ENCODE measurements at regions of chr9 and their contacts with region 1.

Region 1: GRCh38 chr9:136283291-136284235 is 20.3 kb downstream of the CCDC187 start:
- DNase-seq: peak; percentile 43 to 57
- ATAC-seq: peak; percentile 93 to 95
- H3K4me3 ChIP-seq: peak overlapping the region; percentile 23 to 37 (median 26)
- H3K27ac ChIP-seq: no peak overlapping the region
- H3K4me1 ChIP-seq: peaks cover 6 to 8% of the 10 kb centered on the region in 2 donors
- H3K27me3 ChIP-seq: peaks cover 16 to 33% (median 17%) of the 10 kb centered on the region in 3 donors
- CTCF ChIP-seq: peak; percentile 60 to 85 (median 74)
- POLR2A ChIP-seq: no peak

Region 2: GRCh38 chr9:136133191-136133958 is 150.2 kb before region 1 on chr9:
- in situ Hi-C with region 1: no loop called
- intact Hi-C with region 1: loop called (anchors 1 kb)
- DNase-seq: no peak
- ATAC-seq: no peak
- H3K4me3 ChIP-seq: peak overlapping the region; percentile 12 to 39 (median 34)
- H3K27ac ChIP-seq: no peak overlapping the region
- H3K4me1 ChIP-seq: peaks cover 4% of the 10 kb centered on the region in 2 donors
- H3K27me3 ChIP-seq: peaks cover 65 to 88% (median 76%) of the 10 kb centered on the region in 3 donors
- CTCF ChIP-seq: peak in 1 of 5 experiments; percentile 13
- POLR2A ChIP-seq: no peak

Region 3: DNA sequence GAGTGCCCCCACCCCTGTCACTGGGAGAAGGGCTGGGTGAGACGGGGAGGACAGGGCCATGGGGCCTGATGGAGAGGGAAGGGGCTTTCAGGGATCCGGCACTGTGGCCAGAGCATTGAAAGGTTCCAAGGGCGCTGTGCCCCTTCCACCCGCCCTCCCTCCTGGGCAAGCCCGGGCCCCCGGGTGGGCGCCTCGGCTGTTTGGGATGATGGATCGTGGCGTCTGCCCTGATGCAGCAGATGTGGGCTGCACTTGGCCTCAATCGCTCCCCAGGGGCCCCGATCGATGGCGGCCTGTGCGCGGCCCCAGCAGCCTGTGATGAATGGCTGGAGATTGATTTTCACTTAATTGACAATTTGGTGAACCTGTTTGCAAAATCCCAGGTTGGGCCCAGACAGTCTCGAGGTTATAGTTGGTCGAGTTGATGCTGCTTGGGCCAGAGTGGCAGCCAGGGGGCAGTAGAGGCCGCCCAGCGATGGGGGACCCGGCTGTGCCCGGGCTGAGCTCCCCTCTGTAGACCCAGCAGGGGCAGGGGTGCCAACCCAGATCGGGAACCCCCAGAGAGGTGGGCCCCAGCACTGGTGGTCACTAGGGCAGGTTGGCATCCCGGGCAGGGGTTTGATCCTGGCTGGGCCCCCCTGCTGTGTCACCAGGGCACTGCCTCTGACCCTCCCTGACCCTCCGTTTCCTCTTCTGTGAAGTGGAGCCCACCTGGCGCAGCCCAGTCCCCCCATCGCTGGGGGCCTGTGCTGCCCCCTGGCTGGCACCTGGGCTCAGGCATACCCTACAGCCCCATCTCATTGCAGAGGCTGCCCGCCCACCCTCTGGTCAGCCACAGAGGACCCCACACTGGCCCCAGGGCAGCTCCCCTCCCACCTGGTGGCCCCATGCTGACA is 113.3 kb before region 1 on chr9:
- in situ Hi-C with region 1: loop called in 1 of 4 experiments (anchors 25 kb)
- intact Hi-C with region 1: loop called (anchors 1 kb)
- DNase-seq: no peak
- ATAC-seq: no peak
- H3K4me3 ChIP-seq: no peak overlapping the region
- H3K27ac ChIP-seq: no peak overlapping the region
- H3K4me1 ChIP-seq: no peaks in the 10 kb centered on the region
- H3K27me3 ChIP-seq: peaks cover 18 to 33% (median 31%) of the 10 kb centered on the region in 3 donors
- CTCF ChIP-seq: peak in 4 of 5 experiments; percentile 34 to 54 (median 48)
- POLR2A ChIP-seq: no peak

Region 4: GRCh38 chr9:136345281-136346156 is 62.0 kb after region 1 on chr9:
- in situ Hi-C with region 1: no loop called
- intact Hi-C with region 1: no loop called
- DNase-seq: peak in 1 of 2 donors; percentile 39
- ATAC-seq: peak; percentile 40 to 46
- H3K4me3 ChIP-seq: peak overlapping the region in 1 of 4 donors; percentile 22
- H3K27ac ChIP-seq: no peak overlapping the region
- H3K4me1 ChIP-seq: peaks cover 0 to 5% of the 10 kb centered on the region in 2 donors
- H3K27me3 ChIP-seq: peaks cover 7 to 33% (median 20%) of the 10 kb centered on the region in 3 donors
- CTCF ChIP-seq: peak in 1 of 5 experiments; percentile 17
- POLR2A ChIP-seq: no peak

Region 5: DNA sequence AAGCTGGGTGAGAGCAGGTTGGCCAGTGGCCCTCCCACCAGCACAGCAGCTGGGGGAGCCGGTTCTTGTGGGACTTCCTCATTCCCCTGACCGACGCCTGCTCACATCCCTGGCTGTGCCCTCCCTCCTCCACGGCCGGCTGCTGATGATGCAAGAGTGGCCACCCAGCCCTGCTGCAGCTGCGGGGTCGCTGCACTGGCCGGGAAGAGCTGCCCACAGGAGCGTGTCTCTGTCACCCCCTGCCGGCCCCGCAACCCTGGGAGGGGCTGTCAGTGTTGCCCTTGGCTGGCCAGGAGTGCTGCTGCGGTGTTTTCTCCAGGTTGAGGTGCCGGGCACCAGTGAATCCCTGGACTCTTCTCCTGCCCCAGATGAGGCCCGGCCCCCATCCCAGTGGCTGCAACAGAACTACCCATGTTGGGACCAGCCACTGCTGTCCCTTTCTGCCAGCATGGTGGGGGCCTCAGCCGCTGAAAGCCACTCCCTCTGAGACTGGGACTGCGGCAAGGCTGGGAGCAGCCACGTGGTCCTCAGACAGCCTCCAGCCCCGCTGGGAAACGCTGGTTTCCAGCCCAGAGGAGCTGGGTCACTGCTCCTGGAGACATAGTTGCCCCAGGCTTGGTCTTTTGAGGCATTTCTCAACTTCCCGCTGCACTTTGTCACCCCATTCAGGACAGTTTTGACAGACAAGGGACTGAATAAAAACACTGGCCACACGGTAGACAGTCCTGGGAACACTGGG is 89.2 kb after region 1 on chr9:
- in situ Hi-C with region 1: no loop called
- intact Hi-C with region 1: no loop called
- DNase-seq: peak; percentile 31 to 42
- ATAC-seq: peak in 1 of 2 donors; percentile 34
- H3K4me3 ChIP-seq: peak overlapping the region in 2 of 4 donors; percentile 17 to 26
- H3K27ac ChIP-seq: no peak overlapping the region
- H3K4me1 ChIP-seq: no peaks in the 10 kb centered on the region
- H3K27me3 ChIP-seq: peaks cover 0 to 5% (median 0%) of the 10 kb centered on the region in 3 donors
- CTCF ChIP-seq: no peak
- POLR2A ChIP-seq: no peak